Mammary epithelial cell (primary cell): ENCODE measurements at regions of chr7 and their contacts with region 1.

Region 1: DNA sequence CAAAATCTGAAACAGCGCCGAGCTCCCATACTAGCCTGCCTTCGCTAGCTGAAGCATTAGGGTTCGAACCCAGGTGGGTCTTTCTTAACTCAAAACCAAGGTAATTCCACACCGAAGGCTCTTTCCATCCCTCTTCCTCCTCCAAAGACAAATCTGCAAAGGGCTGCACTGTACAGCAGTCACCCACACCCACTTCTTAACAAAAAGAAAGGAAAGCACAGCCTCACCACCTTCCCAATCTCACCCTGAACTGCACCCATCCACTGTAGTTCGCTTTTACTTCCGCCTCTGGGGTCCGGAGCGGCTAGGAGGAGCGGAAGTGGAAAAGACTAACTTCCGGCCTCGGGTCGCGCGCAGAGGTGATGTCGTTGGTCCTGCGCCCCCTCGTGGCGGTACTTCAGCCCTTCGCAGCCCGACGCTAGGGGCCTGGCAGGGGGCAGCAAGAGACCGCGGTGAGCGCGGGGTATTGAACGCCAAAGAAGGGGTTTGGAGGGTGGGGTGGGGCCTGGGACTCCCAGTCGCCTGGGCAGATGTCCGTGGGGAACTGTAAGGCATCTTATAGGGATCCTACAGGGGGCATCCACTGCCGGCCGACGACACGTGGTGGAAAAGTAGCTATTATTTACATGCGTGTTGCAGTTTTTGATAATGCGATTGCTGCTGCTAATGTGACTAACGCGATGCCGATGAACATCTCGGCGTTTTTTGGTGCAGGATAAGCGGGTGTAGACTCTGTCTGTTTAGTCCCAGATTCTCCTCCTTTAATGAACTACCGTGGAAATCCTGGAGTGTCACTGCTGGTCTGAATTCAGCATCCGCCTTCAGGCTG is at the start of gene MTERF1:
- DNase-seq: peak; percentile 85
- H3K4me3 ChIP-seq: peak within 1 kb of the TSS; percentile 69 to 85 (median 72)
- H3K27ac ChIP-seq: peak within 1 kb of the TSS; percentile 55
- H3K4me1 ChIP-seq: peaks cover 3% of the 10 kb centered on the region
- H3K27me3 ChIP-seq: no peaks in the 10 kb centered on the region
- CTCF ChIP-seq: peak; percentile 84 to 97
- total RNA-seq, gene MTERF1: 11.1 to 16.5 TPM

Region 2: GRCh38 chr7:90053091-90053490 is 1827.5 kb before region 1 on chr7:
- CTCF ChIA-PET with region 1: no interaction called
- dilution Hi-C with region 1: no loop called
- in situ Hi-C with region 1: no loop called
- intact Hi-C with region 1: no loop called
- DNase-seq: no peak
- H3K4me3 ChIP-seq: no peak overlapping the region
- H3K27ac ChIP-seq: no peak overlapping the region
- H3K4me1 ChIP-seq: no peaks in the 10 kb centered on the region
- H3K27me3 ChIP-seq: no peaks in the 10 kb centered on the region
- CTCF ChIP-seq: no peak

Region 3: DNA sequence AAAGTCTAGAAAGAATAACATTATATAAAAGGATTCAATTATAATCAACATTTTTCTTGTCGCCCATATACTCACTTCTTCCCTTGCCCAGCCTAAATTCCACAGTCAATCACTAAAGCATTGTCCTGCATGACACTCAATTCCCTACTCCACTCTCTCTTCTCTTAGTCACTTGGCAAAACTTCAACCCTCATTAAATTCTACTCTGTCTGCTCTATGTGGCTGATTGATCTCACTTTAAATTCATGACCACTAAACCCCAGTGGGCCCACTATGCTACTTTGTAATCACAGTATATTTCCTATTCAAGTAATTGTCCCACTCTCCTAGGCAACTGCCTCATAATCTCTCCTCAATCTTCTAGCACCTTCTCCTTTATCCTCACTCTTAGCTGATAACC is 54.2 kb before region 1 on chr7:
- CTCF ChIA-PET with region 1: interaction called, 4 read pairs
- dilution Hi-C with region 1: no loop called
- in situ Hi-C with region 1: loop called in 1 of 2 experiments (anchors 5 kb)
- intact Hi-C with region 1: loop called (anchors 1 kb)
- DNase-seq: peak; percentile 48
- H3K4me3 ChIP-seq: no peak overlapping the region
- H3K27ac ChIP-seq: no peak overlapping the region
- H3K4me1 ChIP-seq: no peaks in the 10 kb centered on the region
- H3K27me3 ChIP-seq: no peaks in the 10 kb centered on the region
- CTCF ChIP-seq: no peak

Region 4: DNA sequence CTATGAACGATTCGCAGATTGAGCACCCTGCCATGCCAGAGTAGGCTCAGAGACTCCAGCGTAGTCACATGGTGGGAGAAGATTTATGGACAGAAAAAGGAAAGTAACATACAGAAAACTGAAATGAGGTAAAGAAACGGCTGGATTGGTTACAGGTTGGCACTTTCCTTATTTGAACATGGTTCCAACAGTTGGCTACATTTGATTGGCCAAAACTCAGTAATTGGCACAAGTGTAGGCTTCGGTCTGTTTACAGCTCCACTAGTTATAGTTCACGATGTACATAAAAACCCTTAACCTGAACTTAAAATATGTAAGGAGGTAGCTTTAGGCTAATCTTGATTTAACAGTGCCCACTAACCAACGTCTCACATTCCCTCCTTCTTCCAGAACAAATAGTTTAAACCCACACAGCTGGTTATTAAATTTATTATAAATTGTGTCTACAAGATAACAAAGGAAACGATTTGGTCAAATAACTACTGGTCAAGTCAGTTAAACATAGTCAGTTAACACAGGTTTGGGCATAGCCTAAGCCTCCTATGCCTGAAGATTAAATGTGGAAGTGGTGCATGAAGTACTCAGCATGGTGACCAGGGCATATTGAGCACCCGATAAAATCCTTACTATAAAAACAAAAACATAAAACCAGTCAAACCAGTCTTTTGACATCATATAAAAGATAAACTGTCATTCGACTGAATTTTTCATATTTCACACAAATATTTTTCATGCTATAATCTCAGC is 17.8 kb after region 1 on chr7:
- CTCF ChIA-PET with region 1: no interaction called
- dilution Hi-C with region 1: no loop called
- in situ Hi-C with region 1: no loop called
- intact Hi-C with region 1: no loop called
- DNase-seq: no peak
- H3K4me3 ChIP-seq: no peak overlapping the region
- H3K27ac ChIP-seq: no peak overlapping the region
- H3K4me1 ChIP-seq: no peaks in the 10 kb centered on the region
- H3K27me3 ChIP-seq: no peaks in the 10 kb centered on the region
- CTCF ChIP-seq: no peak

Region 5: GRCh38 chr7:91940572-91941341 is 60.1 kb after region 1 on chr7 and contains the start of gene AKAP9:
- CTCF ChIA-PET with region 1: interaction called, 11 read pairs
- dilution Hi-C with region 1: no loop called
- in situ Hi-C with region 1: no loop called
- intact Hi-C with region 1: loop called (anchors 1 kb)
- DNase-seq: peak; percentile 86
- H3K4me3 ChIP-seq: peak within 1 kb of the TSS; percentile 80 to 95 (median 91)
- H3K27ac ChIP-seq: peak within 1 kb of the TSS; percentile 81
- H3K4me1 ChIP-seq: peaks cover 6% of the 10 kb centered on the region
- H3K27me3 ChIP-seq: no peaks in the 10 kb centered on the region
- CTCF ChIP-seq: no peak
- total RNA-seq, gene AKAP9: 34.8 to 42.1 TPM

Region 6: GRCh38 chr7:91953618-91954017 is 73.0 kb after region 1 on chr7:
- CTCF ChIA-PET with region 1: no interaction called
- dilution Hi-C with region 1: no loop called
- in situ Hi-C with region 1: no loop called
- intact Hi-C with region 1: loop called (anchors 1 kb)
- DNase-seq: peak; percentile 3
- H3K4me3 ChIP-seq: no peak overlapping the region
- H3K27ac ChIP-seq: no peak overlapping the region
- H3K4me1 ChIP-seq: peaks cover 5% of the 10 kb centered on the region
- H3K27me3 ChIP-seq: no peaks in the 10 kb centered on the region
- CTCF ChIP-seq: peak; percentile 13 to 22

Region 7: GRCh38 chr7:92121681-92122080 is 241.1 kb after region 1 on chr7:
- CTCF ChIA-PET with region 1: no interaction called
- dilution Hi-C with region 1: no loop called
- in situ Hi-C with region 1: no loop called
- intact Hi-C with region 1: loop called (anchors 10 kb)
- DNase-seq: no peak
- H3K4me3 ChIP-seq: no peak overlapping the region
- H3K27ac ChIP-seq: no peak overlapping the region
- H3K4me1 ChIP-seq: no peaks in the 10 kb centered on the region
- H3K27me3 ChIP-seq: no peaks in the 10 kb centered on the region
- CTCF ChIP-seq: no peak

Region 8: DNA sequence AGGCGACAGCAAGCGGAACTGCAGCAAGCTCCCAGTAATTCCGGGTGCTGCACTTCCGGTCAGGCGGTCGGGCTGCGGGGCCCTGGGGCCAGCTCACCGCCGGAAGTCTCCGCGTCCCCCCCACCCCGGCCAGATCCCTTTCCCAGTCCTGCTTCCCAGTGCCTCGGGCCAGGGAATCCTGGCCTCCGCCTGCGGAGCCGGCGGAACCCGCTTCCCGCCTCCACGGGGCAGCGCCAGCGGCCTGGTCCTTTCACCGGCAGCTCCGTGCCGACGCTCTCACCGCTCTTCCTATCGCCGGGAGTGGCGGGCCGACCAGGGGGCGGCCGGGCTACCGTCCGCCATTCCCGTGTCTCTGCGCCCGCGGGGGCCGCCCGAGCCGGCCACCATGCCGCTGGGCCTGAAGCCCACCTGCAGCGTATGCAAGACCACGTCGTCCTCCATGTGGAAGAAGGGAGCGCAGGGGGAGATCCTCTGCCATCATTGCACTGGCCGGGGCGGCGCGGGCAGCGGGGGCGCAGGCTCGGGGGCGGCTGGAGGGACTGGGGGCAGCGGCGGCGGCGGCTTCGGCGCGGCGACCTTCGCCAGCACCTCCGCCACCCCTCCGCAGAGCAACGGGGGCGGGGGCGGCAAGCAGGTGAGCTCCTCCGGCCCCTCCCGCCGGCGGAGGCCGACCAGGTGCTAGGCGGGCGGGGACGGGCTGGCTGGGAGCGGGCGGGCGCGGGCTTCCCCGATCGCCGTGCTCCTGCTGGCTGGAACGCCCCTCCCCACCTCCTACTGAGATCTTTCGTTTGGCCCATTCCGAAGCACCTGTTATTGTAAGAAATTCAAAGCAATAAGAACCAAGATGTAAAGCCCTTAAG is 566.9 kb after region 1 on chr7 and contains the start of gene GATAD1:
- CTCF ChIA-PET with region 1: interaction called, 10 read pairs
- dilution Hi-C with region 1: no loop called
- in situ Hi-C with region 1: no loop called
- intact Hi-C with region 1: loop called (anchors 1 kb)
- DNase-seq: peak; percentile 86
- H3K4me3 ChIP-seq: peak within 1 kb of the TSS; percentile 97 to 98 (median 97)
- H3K27ac ChIP-seq: peak within 1 kb of the TSS; percentile 85
- H3K4me1 ChIP-seq: peaks cover 4% of the 10 kb centered on the region
- H3K27me3 ChIP-seq: no peaks in the 10 kb centered on the region
- CTCF ChIP-seq: peak; percentile 83 to 93
- total RNA-seq, gene GATAD1: 26.2 to 30.2 TPM